GM10248 (cell line): ENCODE measurements at regions of chr3 and their contacts with region 1.

Region 1: DNA sequence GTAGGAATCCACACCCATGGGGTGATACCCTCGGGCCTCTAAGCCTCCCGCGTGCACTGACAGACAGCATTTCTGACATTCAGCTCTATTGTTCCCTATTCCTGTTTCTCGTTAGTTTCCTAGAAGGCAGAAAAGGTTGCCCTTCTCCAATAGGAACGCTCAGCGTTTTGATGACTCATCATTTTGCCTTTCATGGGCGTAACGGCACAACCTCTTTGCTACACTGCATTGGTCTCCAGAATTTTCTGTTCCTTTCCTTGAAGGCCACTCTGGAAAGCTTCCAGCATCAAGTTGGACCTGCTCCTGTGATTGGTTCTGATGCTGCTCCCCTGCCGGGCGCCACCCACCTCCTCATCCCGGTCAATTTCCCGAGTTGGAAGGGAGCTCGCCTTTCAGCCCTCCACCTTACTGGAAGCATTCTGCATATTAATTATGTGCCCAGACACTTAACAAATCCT is 13.0 kb upstream of the TNK2 start:
- DNase-seq: no peak
- CTCF ChIP-seq: no peak

Region 2: DNA sequence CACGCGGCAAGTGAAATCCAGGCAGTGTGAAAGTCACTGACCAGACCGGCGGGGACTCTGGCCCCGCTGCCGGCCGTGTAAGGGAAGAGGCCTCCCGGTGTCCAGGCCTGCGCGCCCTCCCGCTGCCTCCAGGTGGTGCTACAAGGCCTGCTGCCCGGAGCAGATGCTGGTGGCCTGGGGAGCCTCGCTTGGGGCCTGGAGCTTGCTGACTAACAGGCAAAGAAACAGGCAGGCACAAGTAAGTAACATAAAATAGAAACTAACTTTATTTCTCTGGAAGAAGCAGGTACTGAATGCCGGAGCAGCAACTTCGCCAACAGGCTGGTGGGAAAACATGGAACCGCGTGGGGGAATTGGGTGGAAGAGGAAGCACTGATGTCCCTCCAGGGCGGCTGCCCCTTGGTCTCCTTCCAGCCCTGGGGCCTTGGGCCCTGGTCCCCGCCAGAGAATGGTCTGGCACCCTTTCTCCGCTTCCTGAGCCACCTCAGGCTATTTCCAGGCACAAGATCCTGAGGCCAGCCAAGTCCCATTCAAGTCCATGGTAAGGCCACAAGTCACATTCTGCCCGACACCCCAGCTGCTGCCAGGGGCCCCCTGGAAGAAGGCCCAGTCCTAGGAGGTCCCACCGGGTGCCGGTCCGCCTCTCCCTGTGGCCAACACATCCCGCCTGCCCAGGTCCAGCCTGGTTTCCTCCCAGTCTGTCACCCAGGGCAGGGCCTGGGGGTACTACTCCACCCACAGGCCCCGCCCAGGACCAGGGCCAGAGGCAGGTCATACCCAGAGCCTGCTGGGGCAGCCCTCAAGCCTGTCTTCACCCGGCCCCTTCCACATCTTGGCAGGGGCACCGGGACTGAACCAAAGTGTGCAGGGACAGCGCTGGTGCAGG is 58.0 kb before region 1 on chr3:
- CTCF ChIA-PET with region 1: interaction called, 144 read pairs
- POLR2A ChIA-PET with region 1: no interaction called
- DNase-seq: peak; percentile 84
- CTCF ChIP-seq: peak; percentile 94

Region 3: DNA sequence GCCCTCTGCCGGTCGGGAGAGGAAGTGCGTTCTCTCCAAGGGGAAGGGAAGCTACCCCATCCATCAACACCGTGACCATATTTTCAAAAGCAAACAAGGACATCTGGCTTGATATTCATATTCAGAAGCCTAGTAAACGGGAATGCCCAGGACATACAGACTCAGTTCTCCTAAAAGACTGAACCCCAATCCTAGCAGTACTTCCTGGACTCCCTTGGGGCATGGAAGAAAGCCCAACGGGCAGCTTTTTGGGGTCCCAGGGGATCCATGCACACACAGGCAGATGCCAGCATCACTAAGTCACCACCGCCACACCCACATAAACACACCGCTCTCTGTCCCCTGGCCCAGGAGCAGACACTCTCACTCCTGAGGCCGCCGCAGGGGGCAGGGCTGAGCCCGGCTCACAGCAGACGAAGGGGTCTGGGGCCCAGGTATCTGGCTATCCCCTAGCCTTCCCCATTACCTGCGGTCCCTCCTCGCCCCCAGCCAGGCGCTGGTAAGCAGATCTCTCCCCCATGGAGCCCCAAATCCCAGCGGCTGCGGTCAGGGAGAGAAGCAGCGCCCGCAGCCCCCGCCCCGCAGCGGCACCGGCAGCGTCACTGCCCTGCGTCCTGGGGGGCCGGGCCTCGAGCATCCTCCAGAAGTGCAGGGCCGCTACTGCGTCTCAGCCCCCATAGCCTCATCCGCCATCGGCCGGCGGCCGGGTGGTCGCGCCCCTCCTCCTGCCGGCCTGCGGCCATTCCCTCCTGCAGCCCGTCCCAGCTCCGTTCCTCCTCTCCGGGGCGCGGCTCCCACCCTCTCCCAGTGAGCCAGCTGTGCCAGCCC is 26.4 kb before region 1 on chr3:
- CTCF ChIA-PET with region 1: interaction called, 136 read pairs
- POLR2A ChIA-PET with region 1: no interaction called
- DNase-seq: peak; percentile 82
- CTCF ChIP-seq: peak; percentile 97